ENCODE measurements at regions of chr10 and their contacts with region 1.

Region 1: GRCh38 chr10:19904193-19904661 is 88.0 kb downstream of the PLXDC2 start:
- DNase-seq: no peak

Region 2: GRCh38 chr10:19941206-19941880 is 37.1 kb after region 1 on chr10:
- intact Hi-C with region 1: loop called (anchors 1 kb)
- DNase-seq: no peak

Measured in posterior cingulate gyrus (tissue), 11 donors.